PC-3 (cell line): ENCODE measurements at regions of chr1 and their contacts with region 1.

Region 1: DNA sequence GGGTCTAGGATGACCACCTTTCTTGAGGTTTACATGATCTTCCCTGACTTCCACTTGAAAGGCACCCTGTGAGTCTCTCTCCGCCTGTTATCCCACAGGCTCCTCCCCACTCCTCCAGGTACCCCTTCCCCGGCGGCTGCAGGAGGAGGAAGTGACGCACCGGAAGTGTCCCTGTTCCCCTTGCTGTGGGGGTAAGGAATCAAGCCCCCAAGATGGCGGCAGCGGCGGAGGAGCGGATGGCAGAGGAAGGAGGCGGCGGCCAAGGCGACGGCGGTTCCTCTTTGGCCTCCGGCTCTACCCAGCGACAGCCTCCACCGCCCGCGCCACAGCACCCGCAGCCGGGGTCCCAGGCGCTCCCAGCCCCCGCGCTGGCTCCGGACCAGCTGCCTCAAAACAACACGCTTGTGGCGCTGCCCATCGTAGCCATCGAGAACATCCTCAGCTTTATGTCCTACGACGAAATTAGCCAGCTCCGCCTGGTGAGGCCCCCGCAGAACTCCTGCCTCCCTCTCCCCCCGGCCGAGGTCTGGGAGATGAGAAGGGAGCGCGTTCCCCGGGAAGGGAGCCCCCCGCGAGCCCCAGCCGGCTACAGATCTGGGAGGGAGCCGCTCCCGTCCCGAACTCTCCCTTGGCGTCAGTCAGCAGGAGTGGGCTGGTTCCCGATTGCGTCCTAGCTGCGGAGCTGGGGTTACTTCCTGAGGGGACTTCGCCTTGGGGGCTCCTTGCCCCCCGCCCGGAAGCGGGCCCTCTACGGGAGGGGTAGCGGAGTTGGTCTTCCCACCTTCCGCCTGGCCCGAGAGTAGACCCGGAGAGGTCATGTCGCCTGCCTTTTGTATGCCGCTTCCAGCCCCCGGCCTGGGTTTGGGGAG is at the start of gene FBXO28:
- DNase-seq: peak; percentile 98
- ATAC-seq: peak; percentile 94
- H3K4me3 ChIP-seq: peak within 1 kb of the TSS; percentile 91
- H3K27ac ChIP-seq: peak within 1 kb of the TSS; percentile 48
- H3K4me1 ChIP-seq: peaks cover 26% of the 10 kb centered on the region
- H3K27me3 ChIP-seq: no peaks in the 10 kb centered on the region
- CTCF ChIP-seq: no peak
- total RNA-seq, gene FBXO28: 57.7 and 82.6 TPM in 2 replicates

Region 2: GRCh38 chr1:223811634-223812415 is 302.3 kb before region 1 on chr1:
- CTCF ChIA-PET with region 1: no interaction called
- POLR2A ChIA-PET with region 1: no interaction called
- intact Hi-C with region 1: loop called (anchors 10 kb)
- DNase-seq: peak; percentile 79
- ATAC-seq: peak; percentile 61
- H3K4me3 ChIP-seq: no peak overlapping the region
- H3K27ac ChIP-seq: no peak overlapping the region
- H3K4me1 ChIP-seq: peaks cover 28% of the 10 kb centered on the region
- H3K27me3 ChIP-seq: no peaks in the 10 kb centered on the region
- CTCF ChIP-seq: peak; percentile 85

Region 3: GRCh38 chr1:224067621-224068457 is 46.3 kb before region 1 on chr1:
- CTCF ChIA-PET with region 1: no interaction called
- POLR2A ChIA-PET with region 1: no interaction called
- intact Hi-C with region 1: loop called (anchors 2 kb)
- DNase-seq: peak; percentile 97
- ATAC-seq: peak; percentile 73
- H3K4me3 ChIP-seq: no peak overlapping the region
- H3K27ac ChIP-seq: peak overlapping the region; percentile 83
- H3K4me1 ChIP-seq: peaks cover 64% of the 10 kb centered on the region
- H3K27me3 ChIP-seq: no peaks in the 10 kb centered on the region
- CTCF ChIP-seq: no peak

Region 4: DNA sequence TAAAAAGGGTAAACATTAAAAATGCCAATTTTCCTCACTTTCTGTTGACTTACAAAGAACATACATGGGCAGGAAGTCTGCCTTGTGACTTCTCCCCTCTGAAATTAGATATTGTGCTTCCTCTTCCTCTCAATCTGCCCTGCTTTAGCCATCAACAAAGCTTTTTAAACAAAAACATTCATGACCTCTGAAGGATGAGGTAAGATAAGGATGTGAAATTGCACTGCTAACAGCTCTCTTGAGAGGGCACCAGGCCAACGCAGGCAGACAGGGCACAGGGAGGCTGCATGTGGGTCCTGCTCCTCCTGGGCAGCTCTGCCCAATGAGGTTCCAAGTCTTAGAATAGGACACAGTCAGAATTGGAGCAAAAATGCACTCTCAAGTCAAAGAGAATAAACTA is 131.0 kb after region 1 on chr1:
- CTCF ChIA-PET with region 1: no interaction called
- POLR2A ChIA-PET with region 1: no interaction called
- intact Hi-C with region 1: no loop called
- DNase-seq: no peak
- ATAC-seq: peak; percentile 37
- H3K4me3 ChIP-seq: no peak overlapping the region
- H3K27ac ChIP-seq: no peak overlapping the region
- H3K4me1 ChIP-seq: no peaks in the 10 kb centered on the region
- H3K27me3 ChIP-seq: no peaks in the 10 kb centered on the region
- CTCF ChIP-seq: no peak